MCF 10A (cell line): ENCODE measurements at regions of chr18 and their contacts with region 1.

Region 1: GRCh38 chr18:62938487-62938886 is 223.1 kb downstream of the PHLPP1 start:
- DNase-seq: no peak
- H3K4me3 Mint-ChIP-seq: no peak overlapping the region
- H3K27ac Mint-ChIP-seq: no peak overlapping the region
- H3K4me1 Mint-ChIP-seq: peaks cover 15% of the 10 kb centered on the region
- H3K27me3 Mint-ChIP-seq: no peaks in the 10 kb centered on the region
- CTCF ChIP-seq: no peak

Region 2: DNA sequence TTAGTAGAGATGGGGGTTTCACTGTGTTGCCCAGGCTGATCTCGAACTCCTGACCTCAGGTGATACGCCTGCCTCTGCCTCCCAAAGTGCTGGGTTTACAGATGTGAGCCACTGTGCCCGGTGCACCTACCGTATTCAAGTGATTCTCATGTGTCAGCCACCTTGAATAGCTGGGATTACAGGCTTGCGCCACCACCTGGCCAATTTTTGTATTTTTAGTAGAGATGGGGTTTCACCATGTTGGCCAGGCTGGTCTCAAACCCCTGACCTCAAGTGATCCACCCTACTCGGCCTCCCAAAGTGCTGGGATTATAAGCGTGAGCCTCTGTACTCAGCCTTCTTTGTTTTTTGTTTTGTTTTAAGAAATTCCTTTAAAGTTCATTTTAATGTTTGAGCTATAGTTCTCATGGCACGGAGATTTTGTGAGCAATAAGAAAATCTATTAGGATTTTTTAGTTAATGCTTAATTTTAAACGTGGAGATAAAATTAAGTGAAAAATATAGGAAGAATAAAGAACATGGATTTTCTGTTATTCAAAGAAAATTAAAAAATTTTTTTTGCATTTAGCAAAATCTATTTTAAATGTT is 19.5 kb after region 1 on chr18:
- CTCF ChIA-PET with region 1: interaction called, 9 read pairs
- POLR2A ChIA-PET with region 1: interaction called, 11 read pairs
- intact Hi-C with region 1: no loop called
- DNase-seq: peak; percentile 63
- H3K4me3 Mint-ChIP-seq: no peak overlapping the region
- H3K27ac Mint-ChIP-seq: no peak overlapping the region
- H3K4me1 Mint-ChIP-seq: no peaks in the 10 kb centered on the region
- H3K27me3 Mint-ChIP-seq: no peaks in the 10 kb centered on the region
- CTCF ChIP-seq: peak; percentile 49